Left lung (tissue), 14 donors: ENCODE measurements at regions of chr17 and their contacts with region 1.

Region 1: DNA sequence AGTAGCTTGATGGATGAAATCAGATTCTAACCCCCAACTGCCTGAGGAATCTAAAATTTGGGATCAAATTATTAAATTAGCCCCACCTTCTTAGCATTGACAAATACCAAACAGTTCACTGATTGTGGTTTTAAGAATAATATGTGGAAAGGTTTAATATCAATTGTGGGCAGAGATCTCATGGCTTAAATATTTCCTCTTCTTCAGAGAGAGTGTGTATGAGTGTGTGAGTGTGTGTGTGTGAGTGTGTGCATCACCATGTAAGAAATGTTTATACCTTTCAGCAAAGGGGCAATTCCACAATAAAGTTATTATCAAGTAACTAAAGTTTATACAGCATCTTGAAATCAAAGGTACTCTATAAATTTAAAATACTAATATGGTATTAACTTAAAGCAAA is 3.2 kb downstream of the SMURF2 start:
- DNase-seq: no peak
- ATAC-seq: no peak
- H3K4me3 ChIP-seq: peak overlapping the region in 1 of 2 donors; percentile 70
- H3K27ac ChIP-seq: peak overlapping the region; percentile 27 to 49
- H3K4me1 ChIP-seq: peaks cover 16 to 61% of the 10 kb centered on the region in 2 donors
- H3K27me3 ChIP-seq: no peaks in the 10 kb centered on the region
- CTCF ChIP-seq: no peak

Region 2: GRCh38 chr17:64718059-64718458 is 59.1 kb after region 1 on chr17:
- intact Hi-C with region 1: loop called in 1 of 2 experiments (anchors 10 kb)
- DNase-seq: no peak
- ATAC-seq: peak; percentile 70
- H3K4me3 ChIP-seq: no peak overlapping the region
- H3K27ac ChIP-seq: no peak overlapping the region
- H3K4me1 ChIP-seq: peaks cover under 1 to 14% of the 10 kb centered on the region in 2 donors
- H3K27me3 ChIP-seq: no peaks in the 10 kb centered on the region
- CTCF ChIP-seq: no peak